Esophagus muscularis mucosa (tissue), 4 donors: ENCODE measurements at regions of chr1 and their contacts with region 1.

Region 1: GRCh38 chr1:172443626-172444453 is at the start of gene PIGC:
- DNase-seq: peak; percentile 96
- H3K4me3 ChIP-seq: peak within 1 kb of the TSS; percentile 69 to 90 (median 80)
- H3K27ac ChIP-seq: peak within 1 kb of the TSS; percentile 73 to 82 (median 80)
- H3K4me1 ChIP-seq: peaks cover 16 to 32% (median 22%) of the 10 kb centered on the region in 4 donors
- H3K27me3 ChIP-seq: no peaks in the 10 kb centered on the region
- CTCF ChIP-seq: peak; percentile 75 to 91 (median 81)
- EP300 ChIP-seq: no peak
- POLR2A ChIP-seq: no peak
- total RNA-seq, gene PIGC: 18.9 to 25.7 (median 20.9) TPM

Region 2: DNA sequence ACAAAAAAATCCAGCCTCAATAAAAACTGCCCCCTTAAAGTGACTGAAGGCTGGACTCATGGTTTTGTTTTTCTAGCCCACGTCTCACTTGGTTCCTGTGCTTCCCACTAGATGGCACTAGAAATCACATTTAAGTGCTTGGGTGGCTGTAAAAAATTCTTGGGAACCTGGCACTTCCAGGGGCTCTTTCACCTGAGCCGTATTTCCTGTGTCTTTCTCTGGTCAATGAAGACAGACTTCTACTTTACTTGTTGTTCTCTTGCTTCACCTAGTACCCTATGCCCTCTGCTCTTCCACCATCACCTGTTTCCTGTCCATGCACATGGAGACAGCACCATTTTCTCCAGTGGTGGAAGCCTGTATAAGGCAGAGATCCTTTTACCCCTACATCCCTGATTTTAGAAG is 642.4 kb before region 1 on chr1:
- intact Hi-C with region 1: loop called (anchors 5 kb)
- DNase-seq: no peak
- H3K4me3 ChIP-seq: no peak overlapping the region
- H3K27ac ChIP-seq: no peak overlapping the region
- H3K4me1 ChIP-seq: peaks cover 0 to 8% (median 4%) of the 10 kb centered on the region in 4 donors
- H3K27me3 ChIP-seq: no peaks in the 10 kb centered on the region
- CTCF ChIP-seq: peak; percentile 71 to 81 (median 76)
- EP300 ChIP-seq: no peak
- POLR2A ChIP-seq: no peak

Region 3: GRCh38 chr1:172002725-172003345 is 441.0 kb before region 1 on chr1:
- intact Hi-C with region 1: loop called (anchors 5 kb)
- DNase-seq: no peak
- H3K4me3 ChIP-seq: no peak overlapping the region
- H3K27ac ChIP-seq: no peak overlapping the region
- H3K4me1 ChIP-seq: peaks cover 0 to 2% (median 0%) of the 10 kb centered on the region in 4 donors
- H3K27me3 ChIP-seq: no peaks in the 10 kb centered on the region
- CTCF ChIP-seq: peak; percentile 57 to 76 (median 69)
- EP300 ChIP-seq: no peak
- POLR2A ChIP-seq: no peak

Region 4: DNA sequence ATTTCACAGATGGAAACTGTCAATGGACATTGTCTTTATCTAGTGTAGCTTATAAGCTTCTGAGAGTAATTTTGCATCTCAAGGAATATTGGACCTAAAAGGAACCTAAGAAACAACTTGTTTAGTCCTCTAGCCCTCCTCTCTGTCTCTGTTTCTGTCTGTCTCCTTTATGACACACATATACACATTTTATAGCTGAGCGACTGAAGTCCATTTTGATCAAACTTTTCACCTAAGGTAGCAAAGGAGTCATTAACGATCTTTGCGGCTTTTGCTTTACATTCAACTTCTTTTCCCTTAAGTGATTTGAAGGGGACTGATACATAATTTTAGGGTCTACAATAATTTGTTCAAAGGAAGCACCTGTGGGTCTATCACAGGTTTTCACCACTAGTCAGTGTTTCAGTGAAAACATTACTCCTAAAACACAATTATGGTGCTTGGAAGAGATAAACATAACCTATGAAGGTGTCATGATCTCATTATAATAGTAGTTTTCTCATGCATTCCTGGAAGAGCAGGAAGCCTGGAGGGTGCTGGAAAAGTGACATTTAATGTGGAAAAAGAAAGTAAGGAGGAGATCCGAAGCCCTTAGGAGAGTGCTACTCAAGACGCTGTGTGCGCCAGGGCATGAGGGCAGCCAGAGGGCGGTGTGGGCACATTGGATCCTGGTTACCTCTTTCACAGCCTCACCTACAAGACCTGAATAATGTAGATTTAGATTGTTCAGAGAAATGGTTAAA is 353.9 kb before region 1 on chr1:
- intact Hi-C with region 1: loop called (anchors 5 kb)
- DNase-seq: no peak
- H3K4me3 ChIP-seq: no peak overlapping the region
- H3K27ac ChIP-seq: no peak overlapping the region
- H3K4me1 ChIP-seq: no peaks in the 10 kb centered on the region
- H3K27me3 ChIP-seq: no peaks in the 10 kb centered on the region
- CTCF ChIP-seq: peak; percentile 75 to 79 (median 75)
- EP300 ChIP-seq: no peak
- POLR2A ChIP-seq: no peak

Region 5: GRCh38 chr1:172532700-172533509 is 89.1 kb after region 1 on chr1 and contains the start of gene SUCO:
- intact Hi-C with region 1: loop called (anchors 5 kb)
- DNase-seq: peak; percentile 100
- H3K4me3 ChIP-seq: peak within 1 kb of the TSS; percentile 83 to 97 (median 92)
- H3K27ac ChIP-seq: peak within 1 kb of the TSS; percentile 97 to 99 (median 98)
- H3K4me1 ChIP-seq: peaks cover 29 to 55% (median 45%) of the 10 kb centered on the region in 4 donors
- H3K27me3 ChIP-seq: no peaks in the 10 kb centered on the region
- CTCF ChIP-seq: peak in 1 of 3 experiments; percentile 8
- EP300 ChIP-seq: no peak
- POLR2A ChIP-seq: peak; percentile 85
- total RNA-seq, gene SUCO: 21.1 to 31.6 (median 22.3) TPM